ENCODE measurements at regions of chr18 and their contacts with region 1.

Region 1: DNA sequence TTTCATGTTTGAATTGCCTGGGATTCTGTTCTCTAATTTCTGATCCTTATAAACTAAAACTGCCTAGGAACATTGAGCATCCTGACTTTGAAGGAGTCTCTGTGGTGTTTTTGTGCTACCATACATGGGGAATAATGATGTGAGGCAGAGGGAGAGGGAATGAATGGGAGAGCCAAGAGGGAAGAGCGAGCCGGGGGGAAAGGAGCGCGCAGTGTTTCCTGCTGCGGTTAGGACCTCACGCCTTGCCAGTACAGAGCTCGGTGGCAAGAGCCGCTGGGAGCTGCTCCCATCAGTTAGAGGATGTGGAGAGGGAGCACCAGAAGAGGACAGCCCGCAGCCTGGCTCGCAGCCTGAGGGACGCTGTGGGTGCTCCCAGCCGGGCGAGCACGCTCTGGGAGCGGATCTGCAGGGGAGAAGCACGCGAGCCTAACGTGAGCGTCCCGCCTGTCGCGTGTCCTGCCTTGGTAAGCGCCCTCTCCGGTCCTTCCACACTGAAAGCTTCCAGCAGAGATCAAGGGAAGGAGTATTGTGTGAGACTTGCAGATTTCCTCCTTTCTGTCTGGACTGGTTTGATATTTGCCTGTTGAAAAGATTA is 114.7 kb downstream of the FAM210A start:
- DNase-seq: peak; percentile 26
- H3K4me3 Mint-ChIP-seq: peak overlapping the region; percentile 78
- H3K27ac Mint-ChIP-seq: peak overlapping the region; percentile 92
- H3K4me1 Mint-ChIP-seq: peaks cover 87% of the 10 kb centered on the region
- H3K27me3 Mint-ChIP-seq: no peaks in the 10 kb centered on the region

Region 2: GRCh38 chr18:13375302-13376255 is 236.1 kb before region 1 on chr18:
- CTCF ChIA-PET with region 1: no interaction called
- POLR2A ChIA-PET with region 1: interaction called, 8 read pairs
- intact Hi-C with region 1: loop called (anchors 1 kb)
- DNase-seq: peak; percentile 92
- H3K4me3 Mint-ChIP-seq: peak overlapping the region; percentile 49
- H3K27ac Mint-ChIP-seq: peak overlapping the region; percentile 97
- H3K4me1 Mint-ChIP-seq: peaks cover 79% of the 10 kb centered on the region
- H3K27me3 Mint-ChIP-seq: no peaks in the 10 kb centered on the region

Region 3: GRCh38 chr18:13464432-13465123 is 147.1 kb before region 1 on chr18:
- CTCF ChIA-PET with region 1: no interaction called
- POLR2A ChIA-PET with region 1: no interaction called
- intact Hi-C with region 1: loop called (anchors 5 kb)
- DNase-seq: peak; percentile 83
- H3K4me3 Mint-ChIP-seq: peak overlapping the region; percentile 86
- H3K27ac Mint-ChIP-seq: peak overlapping the region; percentile 95
- H3K4me1 Mint-ChIP-seq: peaks cover 56% of the 10 kb centered on the region
- H3K27me3 Mint-ChIP-seq: no peaks in the 10 kb centered on the region

Region 4: GRCh38 chr18:13566941-13567746 is 44.6 kb before region 1 on chr18:
- CTCF ChIA-PET with region 1: interaction called, 86 read pairs
- POLR2A ChIA-PET with region 1: interaction called, 39 read pairs
- intact Hi-C with region 1: loop called (anchors 1 kb)
- DNase-seq: peak; percentile 65
- H3K4me3 Mint-ChIP-seq: peak overlapping the region; percentile 60
- H3K27ac Mint-ChIP-seq: peak overlapping the region; percentile 89
- H3K4me1 Mint-ChIP-seq: peaks cover 74% of the 10 kb centered on the region
- H3K27me3 Mint-ChIP-seq: no peaks in the 10 kb centered on the region

Region 5: GRCh38 chr18:13585379-13586153 is 26.1 kb before region 1 on chr18:
- CTCF ChIA-PET with region 1: interaction called, 6 read pairs
- POLR2A ChIA-PET with region 1: interaction called, 6 read pairs
- intact Hi-C with region 1: loop called (anchors 1 kb)
- DNase-seq: no peak
- H3K4me3 Mint-ChIP-seq: no peak overlapping the region
- H3K27ac Mint-ChIP-seq: no peak overlapping the region
- H3K4me1 Mint-ChIP-seq: peaks cover 55% of the 10 kb centered on the region
- H3K27me3 Mint-ChIP-seq: peaks cover 1% of the 10 kb centered on the region